Endothelial cell of umbilical vein (primary cell): ENCODE measurements at regions of chr7 and their contacts with region 1.

Region 1: DNA sequence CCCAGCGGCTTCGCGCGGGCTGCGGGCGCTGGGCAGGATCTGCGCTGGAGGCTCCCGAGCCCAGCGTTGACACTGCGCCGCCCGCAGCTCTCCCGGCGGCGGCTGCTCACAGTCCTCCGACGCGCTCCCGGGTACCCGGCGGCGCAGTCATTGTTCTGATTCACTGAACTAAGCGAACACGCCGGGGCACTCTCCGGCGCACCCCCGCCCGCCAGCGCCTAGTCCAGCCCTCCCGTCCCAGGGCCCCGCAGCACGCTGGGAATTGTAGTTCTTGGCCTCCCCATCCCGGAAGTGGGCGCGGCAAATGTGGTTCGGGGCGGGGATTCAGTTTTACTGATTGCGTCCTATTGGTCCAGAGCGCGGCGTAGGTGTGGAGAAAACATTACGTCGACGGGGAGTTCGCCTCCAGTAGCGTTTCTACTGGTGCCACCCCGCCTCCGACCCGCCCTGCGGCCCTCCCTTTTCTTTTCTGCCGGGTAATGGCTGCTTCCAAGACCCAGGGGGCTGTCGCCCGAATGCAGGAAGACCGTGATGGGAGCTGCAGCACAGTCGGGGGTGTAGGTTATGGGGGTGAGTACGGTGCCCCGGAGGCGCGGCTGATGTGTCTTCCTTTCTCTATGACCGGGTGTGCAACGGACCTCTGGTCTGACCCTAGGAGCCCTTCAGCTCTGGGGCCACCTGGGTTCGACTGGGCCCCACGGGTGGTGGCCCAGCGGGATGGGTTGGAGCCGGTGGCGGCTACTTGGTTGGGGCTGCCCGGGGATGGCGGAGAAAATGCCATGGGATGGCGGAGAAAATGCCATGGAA is at the starts of genes DOCK4 and ZNF277:
- DNase-seq: peak; percentile 99
- H3K4me3 ChIP-seq: peak within 1 kb of the TSS; percentile 90 to 98 (median 93)
- H3K27ac ChIP-seq: peak within 1 kb of the TSS; percentile 83
- H3K4me1 ChIP-seq: peaks cover 23% of the 10 kb centered on the region
- H3K27me3 ChIP-seq: no peaks in the 10 kb centered on the region
- CTCF ChIP-seq: no peak
- POLR2A ChIP-seq: peak; percentile 93
- total RNA-seq, gene DOCK4: 164 TPM in 2 replicates
- total RNA-seq, gene ZNF277: 19.0 and 22.6 TPM in 2 replicates

Region 2: GRCh38 chr7:111424768-111425167 is 781.7 kb before region 1 on chr7:
- CTCF ChIA-PET with region 1: no interaction called
- POLR2A ChIA-PET with region 1: no interaction called
- dilution Hi-C with region 1: no loop called
- intact Hi-C with region 1: no loop called
- DNase-seq: peak; percentile 46
- H3K4me3 ChIP-seq: no peak overlapping the region
- H3K27ac ChIP-seq: no peak overlapping the region
- H3K4me1 ChIP-seq: peaks cover 2% of the 10 kb centered on the region
- H3K27me3 ChIP-seq: no peaks in the 10 kb centered on the region
- CTCF ChIP-seq: no peak
- POLR2A ChIP-seq: no peak

Region 3: GRCh38 chr7:111763221-111763801 is 443.1 kb before region 1 on chr7:
- CTCF ChIA-PET with region 1: no interaction called
- POLR2A ChIA-PET with region 1: no interaction called
- dilution Hi-C with region 1: no loop called
- intact Hi-C with region 1: loop called (anchors 1 kb)
- DNase-seq: peak; percentile 46
- H3K4me3 ChIP-seq: no peak overlapping the region
- H3K27ac ChIP-seq: no peak overlapping the region
- H3K4me1 ChIP-seq: no peaks in the 10 kb centered on the region
- H3K27me3 ChIP-seq: no peaks in the 10 kb centered on the region
- CTCF ChIP-seq: peak; percentile 15 to 39
- POLR2A ChIP-seq: no peak

Region 4: DNA sequence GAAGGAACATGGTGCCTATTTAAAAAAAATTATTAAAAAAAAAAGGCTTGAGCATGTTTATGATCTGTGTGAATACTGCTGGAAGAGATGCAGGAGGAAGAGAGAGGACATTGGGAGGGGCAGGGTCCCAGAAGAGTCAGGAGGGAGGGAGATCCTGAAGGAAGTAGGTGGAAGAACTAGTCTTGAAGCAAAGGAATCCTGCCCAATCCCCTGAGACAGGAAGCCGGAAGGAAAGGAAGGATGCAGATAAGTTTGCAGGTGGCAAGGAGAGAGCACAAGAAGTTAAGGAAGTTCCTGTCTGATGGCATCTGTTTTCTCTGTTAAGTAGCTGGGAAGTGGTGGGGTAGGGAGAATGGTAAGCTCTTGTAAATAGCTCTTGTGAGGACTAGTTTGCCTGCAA is 318.7 kb before region 1 on chr7:
- CTCF ChIA-PET with region 1: no interaction called
- POLR2A ChIA-PET with region 1: no interaction called
- dilution Hi-C with region 1: no loop called
- intact Hi-C with region 1: loop called (anchors 5 kb)
- DNase-seq: peak; percentile 67
- H3K4me3 ChIP-seq: no peak overlapping the region
- H3K27ac ChIP-seq: no peak overlapping the region
- H3K4me1 ChIP-seq: peaks cover 21% of the 10 kb centered on the region
- H3K27me3 ChIP-seq: no peaks in the 10 kb centered on the region
- CTCF ChIP-seq: no peak
- POLR2A ChIP-seq: no peak

Region 5: DNA sequence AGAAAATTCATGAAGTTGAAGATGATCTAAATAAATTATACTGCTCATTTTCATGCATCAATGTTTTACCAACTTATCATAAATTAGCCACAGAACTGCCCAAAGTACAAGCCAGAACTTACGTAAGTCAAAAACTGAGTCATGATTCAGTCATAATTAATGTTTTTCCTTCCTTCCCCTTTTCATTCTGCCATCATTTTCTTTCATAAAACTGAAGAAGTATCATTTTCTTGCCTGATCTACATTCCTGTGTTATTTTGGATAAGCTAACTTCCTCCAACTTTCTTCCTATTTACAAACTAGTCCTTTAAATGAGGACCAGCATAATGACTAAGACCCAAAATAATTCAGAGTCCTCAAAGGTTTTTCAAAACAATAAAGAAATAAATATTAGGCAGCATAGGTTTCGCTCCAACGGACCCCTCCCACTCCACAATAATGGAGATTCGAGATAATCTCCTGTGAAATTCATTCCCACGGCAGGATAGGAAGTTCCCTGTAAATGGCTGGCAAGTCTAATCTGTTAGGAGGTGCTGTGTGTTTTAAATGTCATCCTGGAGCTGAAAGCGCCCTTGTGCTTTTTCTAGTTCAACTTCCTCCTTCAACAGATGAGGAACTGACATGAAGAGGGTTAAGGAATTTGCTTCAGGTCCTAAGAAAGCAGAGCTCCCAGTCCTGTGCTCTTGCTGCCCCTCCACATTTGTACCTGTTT is 219.2 kb before region 1 on chr7:
- CTCF ChIA-PET with region 1: no interaction called
- POLR2A ChIA-PET with region 1: no interaction called
- dilution Hi-C with region 1: no loop called
- intact Hi-C with region 1: loop called (anchors 2 kb)
- DNase-seq: peak; percentile 83
- H3K4me3 ChIP-seq: peak overlapping the region in 1 of 3 experiments; percentile 45
- H3K27ac ChIP-seq: peak overlapping the region; percentile 89
- H3K4me1 ChIP-seq: peaks cover 30% of the 10 kb centered on the region
- H3K27me3 ChIP-seq: no peaks in the 10 kb centered on the region
- CTCF ChIP-seq: no peak
- POLR2A ChIP-seq: no peak

Region 6: GRCh38 chr7:112031689-112032088 is 174.8 kb before region 1 on chr7:
- CTCF ChIA-PET with region 1: no interaction called
- POLR2A ChIA-PET with region 1: no interaction called
- dilution Hi-C with region 1: no loop called
- intact Hi-C with region 1: no loop called
- DNase-seq: no peak
- H3K4me3 ChIP-seq: no peak overlapping the region
- H3K27ac ChIP-seq: no peak overlapping the region
- H3K4me1 ChIP-seq: peaks cover 25% of the 10 kb centered on the region
- H3K27me3 ChIP-seq: no peaks in the 10 kb centered on the region
- CTCF ChIP-seq: no peak
- POLR2A ChIP-seq: no peak

Region 7: GRCh38 chr7:112132051-112132694 is 74.3 kb before region 1 on chr7:
- CTCF ChIA-PET with region 1: no interaction called
- POLR2A ChIA-PET with region 1: interaction called, 3 read pairs
- dilution Hi-C with region 1: no loop called
- intact Hi-C with region 1: loop called (anchors 1 kb)
- DNase-seq: peak; percentile 95
- H3K4me3 ChIP-seq: no peak overlapping the region
- H3K27ac ChIP-seq: peak overlapping the region; percentile 91
- H3K4me1 ChIP-seq: peaks cover 43% of the 10 kb centered on the region
- H3K27me3 ChIP-seq: no peaks in the 10 kb centered on the region
- CTCF ChIP-seq: no peak
- POLR2A ChIP-seq: no peak

Region 8: GRCh38 chr7:112192236-112193154 is 13.9 kb before region 1 on chr7:
- CTCF ChIA-PET with region 1: interaction called, 12 read pairs
- POLR2A ChIA-PET with region 1: interaction called, 14 read pairs
- dilution Hi-C with region 1: no loop called
- intact Hi-C with region 1: loop called (anchors 1 kb)
- DNase-seq: peak; percentile 98
- H3K4me3 ChIP-seq: no peak overlapping the region
- H3K27ac ChIP-seq: peak overlapping the region; percentile 90
- H3K4me1 ChIP-seq: peaks cover 71% of the 10 kb centered on the region
- H3K27me3 ChIP-seq: no peaks in the 10 kb centered on the region
- CTCF ChIP-seq: no peak
- POLR2A ChIP-seq: peak; percentile 81

Region 9: GRCh38 chr7:112414855-112415490 is 208.5 kb after region 1 on chr7:
- CTCF ChIA-PET with region 1: interaction called, 3 read pairs
- POLR2A ChIA-PET with region 1: interaction called, 3 read pairs
- dilution Hi-C with region 1: no loop called
- intact Hi-C with region 1: loop called (anchors 1 kb)
- DNase-seq: peak; percentile 63
- H3K4me3 ChIP-seq: no peak overlapping the region
- H3K27ac ChIP-seq: no peak overlapping the region
- H3K4me1 ChIP-seq: no peaks in the 10 kb centered on the region
- H3K27me3 ChIP-seq: no peaks in the 10 kb centered on the region
- CTCF ChIP-seq: peak; percentile 54 to 64
- POLR2A ChIP-seq: no peak

Region 10: DNA sequence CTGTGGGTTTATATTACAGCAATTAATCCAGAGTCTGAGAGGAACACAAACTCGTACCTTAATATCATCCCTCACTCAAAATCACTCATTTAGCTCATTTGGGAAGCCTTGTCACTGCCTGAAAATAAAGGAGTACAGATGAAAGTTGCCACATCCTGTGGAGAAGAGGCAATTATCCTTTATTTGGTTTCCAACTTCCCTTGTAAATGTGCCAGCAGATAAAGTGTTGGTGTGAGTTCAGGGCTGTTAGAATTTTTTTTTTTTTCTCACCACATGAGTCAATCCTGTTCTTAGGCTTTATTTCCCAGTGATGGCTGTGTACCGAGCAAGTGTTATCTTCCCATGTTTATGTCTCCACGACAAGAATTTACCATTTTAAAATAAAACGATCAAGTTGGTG is 1010.9 kb after region 1 on chr7:
- CTCF ChIA-PET with region 1: no interaction called
- POLR2A ChIA-PET with region 1: no interaction called
- dilution Hi-C with region 1: no loop called
- intact Hi-C with region 1: no loop called
- DNase-seq: no peak
- H3K4me3 ChIP-seq: no peak overlapping the region
- H3K27ac ChIP-seq: no peak overlapping the region
- H3K4me1 ChIP-seq: no peaks in the 10 kb centered on the region
- H3K27me3 ChIP-seq: no peaks in the 10 kb centered on the region
- CTCF ChIP-seq: no peak
- POLR2A ChIP-seq: no peak